ENCODE measurements at regions of chr6 and their contacts with region 1.

Region 1: GRCh38 chr6:137202078-137202477 is 17.1 kb downstream of the IFNGR1 start:
- DNase-seq: no peak
- ATAC-seq: peak; percentile 49
- H3K4me3 ChIP-seq: no peak overlapping the region
- H3K27ac ChIP-seq: no peak overlapping the region
- H3K4me1 ChIP-seq: peaks cover 18% of the 10 kb centered on the region; the same call in 1 of the 2 replicates
- H3K27me3 ChIP-seq: no peaks in the 10 kb centered on the region
- CTCF ChIP-seq: peak; percentile 1 to 62 (median 28); a peak in 5 of 6 replicates
- EP300 ChIP-seq: no peak
- POLR2A ChIP-seq: no peak
- RAD21 ChIP-seq: peak; percentile 85

Region 2: GRCh38 chr6:137177611-137178348 is 24.3 kb before region 1 on chr6:
- CTCF ChIA-PET with region 1: interaction called, 6 read pairs
- POLR2A ChIA-PET with region 1: interaction called, 3 read pairs
- RAD21 ChIA-PET with region 1: interaction called, 4 read pairs
- SMC1A ChIA-PET with region 1: interaction called, 10 read pairs
- in situ Hi-C with region 1: no loop called
- intact Hi-C with region 1: no loop called
- DNase-seq: no peak
- ATAC-seq: no peak
- H3K4me3 ChIP-seq: no peak overlapping the region
- H3K27ac ChIP-seq: no peak overlapping the region
- H3K4me1 ChIP-seq: peaks cover 19% of the 10 kb centered on the region
- H3K27me3 ChIP-seq: no peaks in the 10 kb centered on the region
- CTCF ChIP-seq: no peak
- EP300 ChIP-seq: no peak
- POLR2A ChIP-seq: no peak
- RAD21 ChIP-seq: no peak

Measured in GM12878 (cell line).